ENCODE measurements at regions of chr6 and their contacts with region 1.

Region 1: GRCh38 chr6:57021086-57021720 is 25.3 kb upstream of the KIAA1586 start:
- DNase-seq: no peak
- H3K4me3 ChIP-seq: no peak overlapping the region
- H3K27ac ChIP-seq: no peak overlapping the region
- H3K4me1 ChIP-seq: no peaks in the 10 kb centered on the region
- H3K27me3 ChIP-seq: no peaks in the 10 kb centered on the region
- CTCF ChIP-seq: peak in 5 of 6 experiments; percentile 31 to 58 (median 47)
- POLR2A ChIP-seq: no peak

Region 2: GRCh38 chr6:56827908-56828649 is 193.1 kb before region 1 on chr6:
- intact Hi-C with region 1: no loop called
- DNase-seq: no peak
- H3K4me3 ChIP-seq: no peak overlapping the region
- H3K27ac ChIP-seq: no peak overlapping the region
- H3K4me1 ChIP-seq: peaks cover 0 to 6% of the 10 kb centered on the region in 2 donors
- H3K27me3 ChIP-seq: no peaks in the 10 kb centered on the region
- CTCF ChIP-seq: no peak
- POLR2A ChIP-seq: no peak

Region 3: GRCh38 chr6:56902641-56903464 is 118.3 kb before region 1 on chr6:
- intact Hi-C with region 1: loop called (anchors 5 kb)
- DNase-seq: no peak
- H3K4me3 ChIP-seq: no peak overlapping the region
- H3K27ac ChIP-seq: no peak overlapping the region
- H3K4me1 ChIP-seq: no peaks in the 10 kb centered on the region
- H3K27me3 ChIP-seq: no peaks in the 10 kb centered on the region
- CTCF ChIP-seq: peak; percentile 2 to 76 (median 50)
- POLR2A ChIP-seq: no peak

Measured in thyroid gland (tissue), 4 donors.